ENCODE measurements at regions of chr14 and their contacts with region 1.

Region 1: GRCh38 chr14:69879175-69880043 is at the start of gene SMOC1:
- DNase-seq: peak; percentile 92 to 95 (median 94)
- ATAC-seq: peak; percentile 84 to 92 (median 88)
- H3K4me3 ChIP-seq: peak within 1 kb of the TSS; percentile 43 to 88 (median 83)
- H3K27ac ChIP-seq: peak within 1 kb of the TSS; percentile 57 to 91 (median 78)
- H3K4me1 ChIP-seq: peaks cover 0 to 39% (median 16%) of the 10 kb centered on the region in 4 donors
- H3K27me3 ChIP-seq: no peaks in the 10 kb centered on the region
- CTCF ChIP-seq: no peak
- POLR2A ChIP-seq: peak; percentile 99
- total RNA-seq, gene SMOC1: 22.3 to 88.5 (median 45.4) TPM

Region 2: DNA sequence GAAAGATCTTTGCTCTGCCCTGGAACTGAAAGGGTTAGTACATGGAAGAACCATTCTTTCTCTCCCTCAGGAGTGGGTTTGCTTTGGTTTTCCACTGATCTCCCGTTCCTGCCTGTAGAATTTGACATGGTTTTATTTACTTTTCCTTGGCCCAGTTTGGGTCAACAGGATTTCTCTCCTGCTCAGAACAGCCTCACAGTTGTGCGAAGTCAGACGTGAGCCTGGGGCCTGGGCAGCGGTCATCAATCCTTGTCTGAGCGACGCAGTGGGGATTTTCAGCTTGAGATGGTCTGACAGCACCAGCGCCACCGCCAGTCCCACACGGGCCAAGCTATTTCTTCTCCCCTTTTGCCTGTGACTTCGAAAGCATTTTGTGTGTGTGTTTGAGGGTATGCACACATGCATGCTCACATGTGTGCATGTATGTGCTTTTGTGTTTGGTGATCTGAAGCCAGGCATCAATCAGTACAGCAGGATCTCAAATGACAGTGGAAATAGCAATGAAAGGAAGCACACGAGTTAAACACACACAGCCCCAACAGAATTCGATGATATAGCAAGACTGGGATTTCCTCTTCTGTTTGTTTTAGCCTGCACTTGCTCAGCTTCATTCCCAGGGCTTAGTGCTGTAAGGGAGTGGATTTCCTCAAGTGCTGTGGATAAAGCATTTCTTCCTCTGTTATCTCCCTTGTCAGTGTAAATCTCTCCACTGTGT is 58.1 kb after region 1 on chr14:
- intact Hi-C with region 1: loop called in 1 of 2 experiments (anchors 10 kb)
- DNase-seq: peak; percentile 46 to 77 (median 69)
- ATAC-seq: peak; percentile 70 to 79 (median 77)
- H3K4me3 ChIP-seq: no peak overlapping the region
- H3K27ac ChIP-seq: peak overlapping the region in 2 of 3 donors; percentile 67 to 82
- H3K4me1 ChIP-seq: peaks cover 0 to 51% (median 20%) of the 10 kb centered on the region in 4 donors
- H3K27me3 ChIP-seq: no peaks in the 10 kb centered on the region
- CTCF ChIP-seq: no peak
- POLR2A ChIP-seq: no peak

Region 3: DNA sequence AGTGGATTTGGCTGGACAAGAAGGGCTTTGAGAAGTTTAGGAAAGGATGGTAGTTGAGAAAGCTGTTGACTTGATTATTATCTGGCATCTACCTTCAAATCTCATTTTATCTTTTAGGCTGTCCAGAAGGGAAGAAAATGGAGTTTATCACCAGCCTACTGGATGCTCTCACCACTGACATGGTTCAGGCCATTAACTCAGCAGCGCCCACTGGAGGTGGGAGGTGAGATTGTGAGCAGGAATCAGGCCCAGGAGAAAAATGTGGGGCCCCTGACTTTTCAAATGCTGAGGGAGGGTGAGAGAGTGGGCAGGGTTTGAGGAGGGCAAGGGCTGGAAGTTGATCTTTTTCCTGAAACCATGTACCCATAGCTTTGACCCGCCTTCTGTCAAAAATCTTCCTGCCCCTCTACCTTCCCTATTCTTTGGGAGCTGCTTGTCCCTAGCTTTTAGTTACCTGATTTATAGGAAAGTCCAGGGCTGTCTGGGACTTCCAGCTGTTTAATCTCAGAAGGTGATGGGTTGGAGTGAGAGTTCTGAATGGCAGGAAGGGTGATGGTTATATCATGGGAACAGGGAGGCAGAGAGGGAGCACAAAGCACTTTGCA is 134.0 kb after region 1 on chr14:
- intact Hi-C with region 1: loop called in 1 of 2 experiments (anchors 10 kb)
- DNase-seq: peak in 1 of 3 donors; percentile 40
- ATAC-seq: peak; percentile 66 to 83 (median 78)
- H3K4me3 ChIP-seq: no peak overlapping the region
- H3K27ac ChIP-seq: no peak overlapping the region
- H3K4me1 ChIP-seq: peaks cover 0 to 6% (median 0%) of the 10 kb centered on the region in 4 donors
- H3K27me3 ChIP-seq: no peaks in the 10 kb centered on the region
- CTCF ChIP-seq: peak; percentile 57 to 74 (median 72)
- POLR2A ChIP-seq: no peak

Region 4: GRCh38 chr14:70121521-70121920 is 242.1 kb after region 1 on chr14:
- intact Hi-C with region 1: no loop called
- DNase-seq: no peak
- ATAC-seq: no peak
- H3K4me3 ChIP-seq: no peak overlapping the region
- H3K27ac ChIP-seq: no peak overlapping the region
- H3K4me1 ChIP-seq: peaks cover 0 to 7% (median 0%) of the 10 kb centered on the region in 4 donors
- H3K27me3 ChIP-seq: no peaks in the 10 kb centered on the region
- CTCF ChIP-seq: no peak
- POLR2A ChIP-seq: no peak

Measured in right lobe of liver (tissue), 6 donors.